Activated CD4-positive, alpha-beta memory T cell treated with anti-CD3 and anti-CD28 coated beads for 36 hours (primary cell): ENCODE measurements at regions of chr17 and their contacts with region 1.

Region 1: DNA sequence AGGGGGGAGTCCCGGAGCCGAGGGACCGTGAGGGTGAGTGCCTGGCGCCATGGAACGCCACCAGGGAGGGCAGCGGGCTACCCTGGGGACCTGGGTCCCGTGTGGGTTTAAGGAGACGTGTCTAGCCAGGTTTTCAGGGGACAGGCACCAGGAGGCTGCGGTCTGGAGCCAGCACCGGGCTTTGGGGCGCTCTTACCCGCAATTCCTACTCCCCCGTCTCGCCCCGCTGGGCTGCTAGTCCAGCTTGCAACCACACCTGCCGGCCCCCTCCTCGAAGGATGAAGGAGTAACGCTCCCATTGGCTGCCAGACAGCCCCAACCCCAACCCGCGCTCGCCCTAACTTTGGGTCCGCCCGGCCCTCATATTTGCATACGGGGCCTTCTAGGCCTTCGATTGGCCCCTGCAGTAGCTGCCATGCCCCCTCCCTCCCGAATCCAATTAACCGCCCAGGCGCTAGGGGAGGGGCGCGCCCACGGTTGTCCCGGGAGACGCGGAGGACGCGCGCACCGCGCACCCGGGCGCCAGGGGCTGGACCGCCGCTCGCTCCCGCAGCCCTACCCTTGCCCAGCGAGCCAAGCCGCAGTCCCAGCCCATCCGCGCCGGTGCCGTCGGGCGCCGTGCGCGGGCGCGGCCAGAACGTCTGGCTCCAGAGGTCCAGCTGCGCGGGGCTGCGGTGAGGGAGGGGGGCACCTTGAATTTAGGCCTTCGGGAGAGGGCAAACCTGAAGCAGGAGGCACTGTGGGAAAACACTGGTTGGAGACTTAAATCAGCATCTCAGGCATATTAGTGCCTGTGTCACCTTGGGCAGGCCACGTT is at the start of gene TTLL6:
- DNase-seq: peak; percentile 82
- H3K4me3 Mint-ChIP-seq: peak within 1 kb of the TSS; percentile 60
- H3K27ac Mint-ChIP-seq: no peak within 1 kb of the TSS
- H3K4me1 Mint-ChIP-seq: peaks cover 17% of the 10 kb centered on the region
- H3K27me3 Mint-ChIP-seq: peaks cover 44% of the 10 kb centered on the region
- total RNA-seq, gene TTLL6: not detected

Region 2: GRCh38 chr17:48804925-48805411 is 12.0 kb before region 1 on chr17:
- CTCF ChIA-PET with region 1: interaction called, 19 read pairs
- POLR2A ChIA-PET with region 1: no interaction called
- intact Hi-C with region 1: no loop called
- DNase-seq: peak; percentile 76
- H3K4me3 Mint-ChIP-seq: no peak overlapping the region
- H3K27ac Mint-ChIP-seq: no peak overlapping the region
- H3K4me1 Mint-ChIP-seq: no peaks in the 10 kb centered on the region
- H3K27me3 Mint-ChIP-seq: peaks cover 11% of the 10 kb centered on the region

Region 3: DNA sequence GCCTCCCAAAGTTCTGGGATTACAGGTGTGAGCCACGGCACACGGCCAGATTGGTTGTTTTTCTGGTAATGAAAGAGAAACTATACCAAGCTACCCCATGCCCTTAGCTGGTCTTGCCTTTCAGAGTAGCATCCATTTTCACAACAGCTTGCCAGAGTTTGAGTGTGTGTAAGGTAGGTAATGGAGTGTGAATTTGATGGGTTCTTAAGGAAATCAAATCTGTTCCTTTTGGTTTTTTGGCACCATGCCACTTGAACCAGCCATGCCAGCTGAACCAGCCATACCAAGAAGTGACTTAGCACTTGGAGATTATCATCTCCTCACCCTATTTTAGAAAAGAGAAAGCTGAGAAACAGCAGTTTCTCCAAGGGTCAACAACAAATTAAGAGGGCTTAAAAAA is 19.0 kb after region 1 on chr17:
- CTCF ChIA-PET with region 1: interaction called, 10 read pairs
- POLR2A ChIA-PET with region 1: interaction called, 3 read pairs
- intact Hi-C with region 1: loop called (anchors 2 kb)
- DNase-seq: peak; percentile 17
- H3K4me3 Mint-ChIP-seq: no peak overlapping the region
- H3K27ac Mint-ChIP-seq: no peak overlapping the region
- H3K4me1 Mint-ChIP-seq: peaks cover 74% of the 10 kb centered on the region
- H3K27me3 Mint-ChIP-seq: peaks cover 3% of the 10 kb centered on the region

Region 4: GRCh38 chr17:48933035-48933434 is 116.1 kb after region 1 on chr17:
- CTCF ChIA-PET with region 1: no interaction called
- POLR2A ChIA-PET with region 1: no interaction called
- intact Hi-C with region 1: no loop called
- DNase-seq: no peak
- H3K4me3 Mint-ChIP-seq: no peak overlapping the region
- H3K27ac Mint-ChIP-seq: no peak overlapping the region
- H3K4me1 Mint-ChIP-seq: peaks cover 7% of the 10 kb centered on the region
- H3K27me3 Mint-ChIP-seq: no peaks in the 10 kb centered on the region

Region 5: GRCh38 chr17:49061524-49061943 is 244.6 kb after region 1 on chr17:
- CTCF ChIA-PET with region 1: no interaction called
- POLR2A ChIA-PET with region 1: no interaction called
- intact Hi-C with region 1: no loop called
- DNase-seq: no peak
- H3K4me3 Mint-ChIP-seq: no peak overlapping the region
- H3K27ac Mint-ChIP-seq: no peak overlapping the region
- H3K4me1 Mint-ChIP-seq: no peaks in the 10 kb centered on the region
- H3K27me3 Mint-ChIP-seq: no peaks in the 10 kb centered on the region